ENCODE measurements at regions of chr15 and their contacts with region 1.

Region 1: GRCh38 chr15:81323944-81324881 is at the start of gene STARD5:
- DNase-seq: peak; percentile 70
- H3K4me3 ChIP-seq: peak within 1 kb of the TSS; percentile 92
- CTCF ChIP-seq: no peak

Region 2: GRCh38 chr15:81286621-81287121 is 37.5 kb before region 1 on chr15:
- CTCF ChIA-PET with region 1: no interaction called
- POLR2A ChIA-PET with region 1: no interaction called
- DNase-seq: no peak
- H3K4me3 ChIP-seq: no peak overlapping the region
- CTCF ChIP-seq: no peak

Region 3: GRCh38 chr15:81312790-81313543 is 11.2 kb before region 1 on chr15:
- CTCF ChIA-PET with region 1: interaction called, 4 read pairs
- POLR2A ChIA-PET with region 1: interaction called, 11 read pairs
- DNase-seq: peak; percentile 90
- H3K4me3 ChIP-seq: no peak overlapping the region
- CTCF ChIP-seq: no peak

Region 4: DNA sequence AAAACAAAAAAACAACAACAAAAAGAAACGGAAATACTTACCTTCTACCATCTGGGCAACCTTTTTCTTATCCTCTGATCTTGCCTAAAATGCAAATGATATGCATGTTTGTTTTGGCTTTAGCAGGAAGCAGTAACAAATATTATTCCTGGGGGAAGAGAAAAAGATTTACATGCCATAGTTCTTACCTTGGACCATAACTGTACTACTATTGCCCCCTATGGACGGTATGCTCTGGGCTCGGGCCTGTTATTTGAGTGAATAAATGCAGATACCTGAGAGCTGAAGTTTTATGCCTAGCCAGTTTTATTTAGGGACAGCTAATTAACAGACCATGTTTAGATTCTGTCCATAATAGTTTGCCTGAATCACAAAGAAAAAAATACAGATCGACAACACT is 12.4 kb after region 1 on chr15:
- CTCF ChIA-PET with region 1: interaction called, 29 read pairs
- POLR2A ChIA-PET with region 1: interaction called, 22 read pairs
- DNase-seq: no peak
- H3K4me3 ChIP-seq: no peak overlapping the region
- CTCF ChIP-seq: peak; percentile 37

Region 5: GRCh38 chr15:81384891-81385720 is 60.9 kb after region 1 on chr15:
- CTCF ChIA-PET with region 1: no interaction called
- POLR2A ChIA-PET with region 1: no interaction called
- DNase-seq: no peak
- H3K4me3 ChIP-seq: no peak overlapping the region
- CTCF ChIP-seq: no peak

Region 6: GRCh38 chr15:81531109-81531592 is 206.9 kb after region 1 on chr15:
- CTCF ChIA-PET with region 1: no interaction called
- POLR2A ChIA-PET with region 1: no interaction called
- DNase-seq: no peak
- H3K4me3 ChIP-seq: no peak overlapping the region
- CTCF ChIP-seq: no peak

Region 7: DNA sequence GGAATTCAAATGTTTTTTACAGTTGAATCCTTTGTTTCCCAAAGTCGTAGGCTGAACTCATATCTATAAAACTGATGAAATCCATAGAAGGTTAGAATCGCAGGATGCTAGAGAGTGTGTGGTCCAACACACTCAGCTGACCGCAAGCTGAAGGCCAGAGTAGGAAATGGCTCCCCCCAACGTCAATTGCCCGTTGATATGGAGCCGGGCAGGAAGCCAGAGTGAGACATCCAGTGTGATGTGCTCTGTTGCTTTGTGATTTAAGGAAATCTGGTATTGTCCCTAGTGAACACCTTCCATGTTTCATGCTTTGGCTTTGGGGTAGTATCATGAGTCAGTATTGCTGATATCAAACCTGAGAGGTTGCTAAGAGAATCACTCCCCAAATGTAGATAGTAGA is 727.5 kb after region 1 on chr15:
- CTCF ChIA-PET with region 1: no interaction called
- POLR2A ChIA-PET with region 1: no interaction called
- DNase-seq: no peak
- H3K4me3 ChIP-seq: no peak overlapping the region
- CTCF ChIP-seq: no peak